Activated T-helper 1 cell treated with anti-CD3 and anti-CD28 coated beads, Interleukin-12 subunit alpha, Interleukin-12 subunit beta, Interleukin-2, Interleukin-4 antibody, amounts not matched to agents 30 ng/mL and 10 ng/mL and 1 ng/mL, durations not matched to agents 14 hours and 24 hours and 36 hours (primary cell): ENCODE measurements at regions of chr19 and their contacts with region 1.

Region 1: GRCh38 chr19:55674841-55675660 is at the start of gene EPN1:
- DNase-seq: peak; percentile 94
- H3K4me3 Mint-ChIP-seq: peak within 1 kb of the TSS; percentile 98
- H3K27ac Mint-ChIP-seq: peak within 1 kb of the TSS; percentile 95
- H3K4me1 Mint-ChIP-seq: peaks cover 47% of the 10 kb centered on the region
- H3K27me3 Mint-ChIP-seq: no peaks in the 10 kb centered on the region
- total RNA-seq, gene EPN1: 46.0 and 48.3 TPM in 2 replicates

Region 2: GRCh38 chr19:55005684-55006488 is 669.2 kb before region 1 on chr19:
- intact Hi-C with region 1: loop called (anchors 1 kb)
- DNase-seq: peak; percentile 59
- H3K4me3 Mint-ChIP-seq: peak overlapping the region; percentile 81
- H3K27ac Mint-ChIP-seq: peak overlapping the region; percentile 92
- H3K4me1 Mint-ChIP-seq: peaks cover 7% of the 10 kb centered on the region
- H3K27me3 Mint-ChIP-seq: peaks cover 2% of the 10 kb centered on the region

Region 3: DNA sequence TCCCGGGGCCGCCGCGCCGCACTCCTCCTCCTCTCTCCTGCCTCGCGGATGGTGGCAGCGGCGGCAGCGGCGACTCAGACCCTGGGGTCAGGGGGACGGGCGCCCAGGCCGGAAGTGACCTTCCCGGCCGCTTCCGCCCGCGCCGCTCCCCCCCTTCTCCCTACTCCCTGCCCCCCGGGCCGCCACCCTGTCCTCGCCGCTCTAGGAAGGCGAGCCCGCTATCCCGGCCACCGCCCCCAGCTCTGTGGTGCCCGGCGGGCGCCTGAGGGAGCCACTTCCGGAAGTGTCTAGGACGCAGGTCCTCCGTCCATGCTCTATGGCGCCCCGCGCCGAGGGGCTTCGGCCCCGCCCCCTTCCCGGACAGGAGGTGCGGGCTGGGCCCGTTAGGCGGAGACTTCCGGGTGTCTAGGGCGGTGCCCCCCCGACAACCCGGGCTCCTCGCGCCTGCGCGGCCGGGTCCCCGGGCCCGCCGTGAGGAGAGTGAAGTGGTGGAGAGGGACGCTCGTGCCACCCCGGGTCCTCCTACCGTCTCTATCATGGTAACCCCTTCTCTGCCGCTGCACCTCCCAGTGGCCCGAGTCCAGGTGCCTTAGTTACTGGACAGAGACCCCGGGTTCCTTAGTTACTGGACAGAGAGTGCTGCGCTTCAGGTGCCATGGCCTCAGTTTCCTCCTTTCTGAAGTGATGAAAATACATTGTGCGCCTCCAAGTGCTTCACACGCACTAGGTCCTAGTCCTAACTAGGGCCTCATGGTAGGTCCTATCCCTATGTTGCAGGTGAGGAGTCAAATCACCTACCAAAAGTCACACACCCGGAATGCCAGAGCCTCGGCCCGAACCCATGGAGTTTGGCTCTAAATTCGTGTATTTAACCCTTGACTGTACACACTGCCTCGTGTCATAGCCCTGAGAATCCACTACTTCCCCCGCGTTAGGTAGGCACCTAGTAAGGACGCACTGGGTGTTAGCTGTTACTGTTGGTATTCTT is 446.4 kb after region 1 on chr19 and contains the start of gene ZNF787:
- intact Hi-C with region 1: loop called (anchors 5 kb)
- DNase-seq: peak; percentile 97
- H3K4me3 Mint-ChIP-seq: peak within 1 kb of the TSS; percentile 89
- H3K27ac Mint-ChIP-seq: peak within 1 kb of the TSS; percentile 97
- H3K4me1 Mint-ChIP-seq: peaks cover 28% of the 10 kb centered on the region
- H3K27me3 Mint-ChIP-seq: no peaks in the 10 kb centered on the region
- total RNA-seq, gene ZNF787: 41.8 and 42.6 TPM in 2 replicates